ENCODE measurements at regions of chr13 and their contacts with region 1.

Region 1: GRCh38 chr13:60182907-60183306 is 19.2 kb upstream of the DIAPH3 start:
- DNase-seq: no peak
- ATAC-seq: no peak
- H3K4me3 ChIP-seq: no peak overlapping the region
- H3K27ac ChIP-seq: no peak overlapping the region
- H3K4me1 ChIP-seq: no peaks in the 10 kb centered on the region
- H3K27me3 ChIP-seq: no peaks in the 10 kb centered on the region
- CTCF ChIP-seq: no peak
- POLR2A ChIP-seq: no peak

Region 2: DNA sequence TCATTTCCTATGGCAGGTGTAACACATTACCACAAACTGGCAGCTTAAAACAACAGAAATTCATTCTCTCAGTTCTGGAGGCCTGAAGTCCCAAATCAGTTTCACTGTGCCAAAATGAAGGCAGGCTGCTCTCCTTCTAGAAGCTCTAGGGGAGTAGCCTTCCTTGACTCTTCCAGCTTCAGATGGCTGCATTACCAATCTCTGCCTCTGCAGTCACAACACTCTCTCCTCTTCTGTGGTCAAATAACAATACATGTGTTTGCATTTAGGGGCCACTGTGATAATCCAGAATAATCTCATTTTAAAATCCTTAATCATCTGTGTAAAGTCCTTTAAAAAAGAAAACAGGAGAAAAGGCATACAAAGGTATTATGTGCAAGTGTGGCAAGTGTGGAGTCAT is 26.9 kb before region 1 on chr13:
- in situ Hi-C with region 1: no loop called
- intact Hi-C with region 1: loop called (anchors 1 kb)
- DNase-seq: no peak
- ATAC-seq: no peak
- H3K4me3 ChIP-seq: no peak overlapping the region
- H3K27ac ChIP-seq: no peak overlapping the region
- H3K4me1 ChIP-seq: no peaks in the 10 kb centered on the region
- H3K27me3 ChIP-seq: no peaks in the 10 kb centered on the region
- CTCF ChIP-seq: no peak
- POLR2A ChIP-seq: no peak

Measured in gastrocnemius medialis (tissue), 4 donors.